GM12878 (cell line): ENCODE measurements at regions of chr5 and their contacts with region 1.

Region 1: DNA sequence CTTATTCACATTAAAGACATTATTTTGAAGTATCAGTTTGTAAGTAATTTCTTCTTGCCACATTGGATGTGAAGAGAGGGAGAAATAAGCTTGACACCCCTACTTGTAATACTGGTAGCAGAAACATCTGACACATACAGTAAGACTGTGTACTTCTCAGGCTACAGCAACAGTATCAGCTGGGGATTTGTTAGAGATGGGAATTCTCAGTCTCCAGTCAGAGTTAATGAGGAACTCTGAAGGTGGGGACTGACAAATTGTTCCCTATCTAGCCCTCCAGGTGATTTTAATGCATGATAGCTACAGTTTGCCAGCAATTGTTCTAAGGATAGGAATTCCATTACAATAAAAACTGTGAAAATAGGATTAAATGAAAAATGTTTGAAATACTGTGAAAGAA is 524.8 kb downstream of the PRR16 start:
- DNase-seq: no peak
- ATAC-seq: no peak
- H3K4me3 ChIP-seq: no peak overlapping the region
- H3K27ac ChIP-seq: no peak overlapping the region
- H3K4me1 ChIP-seq: no peaks in the 10 kb centered on the region
- H3K27me3 ChIP-seq: no peaks in the 10 kb centered on the region
- CTCF ChIP-seq: no peak
- EP300 ChIP-seq: no peak
- POLR2A ChIP-seq: no peak
- RAD21 ChIP-seq: no peak

Region 2: GRCh38 chr5:120874081-120874862 is 114.7 kb before region 1 on chr5:
- CTCF ChIA-PET with region 1: no interaction called
- POLR2A ChIA-PET with region 1: no interaction called
- RAD21 ChIA-PET with region 1: no interaction called
- SMC1A ChIA-PET with region 1: no interaction called
- in situ Hi-C with region 1: no loop called
- intact Hi-C with region 1: loop called (anchors 1 kb)
- DNase-seq: no peak
- ATAC-seq: no peak
- H3K4me3 ChIP-seq: no peak overlapping the region
- H3K27ac ChIP-seq: no peak overlapping the region
- H3K4me1 ChIP-seq: no peaks in the 10 kb centered on the region
- H3K27me3 ChIP-seq: no peaks in the 10 kb centered on the region
- CTCF ChIP-seq: no peak
- EP300 ChIP-seq: no peak
- POLR2A ChIP-seq: no peak
- RAD21 ChIP-seq: no peak